ENCODE measurements at regions of chr17 and their contacts with region 1.

Region 1: DNA sequence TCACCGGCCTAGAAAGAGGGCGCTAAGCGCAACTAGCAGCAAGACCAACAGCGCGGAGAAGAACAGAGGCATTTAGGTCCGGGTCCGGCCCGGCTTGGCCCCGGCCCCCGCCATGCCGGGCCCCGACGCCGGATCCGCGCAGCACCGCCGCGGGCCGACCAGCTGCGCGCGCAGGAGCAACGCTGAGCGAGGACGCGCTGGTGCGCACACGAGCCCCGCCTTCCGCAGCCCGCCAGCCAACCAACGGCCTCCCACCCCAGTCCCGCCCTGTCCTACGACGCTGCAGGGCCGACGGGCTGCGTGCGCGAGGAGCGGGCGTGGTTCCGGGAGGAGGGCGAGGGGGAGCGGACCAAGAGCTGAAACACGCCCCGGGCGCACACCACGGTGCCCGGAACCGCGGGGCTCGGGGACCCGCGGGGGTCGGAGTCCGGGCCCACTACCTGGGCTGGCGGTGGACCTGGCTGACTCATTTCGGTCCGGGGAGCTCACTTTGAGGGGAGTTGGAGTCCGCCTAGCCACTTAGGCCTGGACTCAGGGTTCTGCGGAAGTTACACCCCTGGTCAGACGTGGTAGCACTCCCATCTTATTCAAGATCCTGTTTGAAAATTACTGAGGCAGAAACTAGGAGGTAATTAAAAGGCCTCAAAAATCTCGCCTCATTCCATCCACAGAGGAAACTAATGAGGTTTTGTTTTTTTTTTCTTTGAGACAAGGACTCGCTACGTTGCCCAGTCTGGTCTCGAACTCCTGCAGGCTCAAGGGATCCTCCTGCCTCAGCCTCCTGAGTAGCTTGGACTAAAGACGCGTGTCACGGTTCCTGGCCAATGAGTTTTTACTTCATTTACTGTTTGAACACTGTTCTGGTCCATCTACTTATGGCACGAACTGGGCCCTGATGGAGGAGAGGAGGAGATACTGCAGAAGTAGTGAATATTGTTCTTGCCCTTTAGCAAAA is at the start of gene BLTP2:
- DNase-seq: peak; percentile 95
- ATAC-seq: peak; percentile 87 to 88
- H3K4me3 ChIP-seq: peak within 1 kb of the TSS; percentile 90 to 92 (median 92)
- H3K27ac ChIP-seq: peak within 1 kb of the TSS; percentile 90 to 98 (median 96)
- H3K4me1 ChIP-seq: peaks cover 29 to 33% of the 10 kb centered on the region in 2 donors
- H3K27me3 ChIP-seq: no peaks in the 10 kb centered on the region
- CTCF ChIP-seq: peak in 3 of 5 experiments; percentile 10 to 29 (median 13)
- POLR2A ChIP-seq: peak; percentile 92 to 94
- total RNA-seq, gene BLTP2: 71.6 to 93.4 (median 81.0) TPM

Region 2: DNA sequence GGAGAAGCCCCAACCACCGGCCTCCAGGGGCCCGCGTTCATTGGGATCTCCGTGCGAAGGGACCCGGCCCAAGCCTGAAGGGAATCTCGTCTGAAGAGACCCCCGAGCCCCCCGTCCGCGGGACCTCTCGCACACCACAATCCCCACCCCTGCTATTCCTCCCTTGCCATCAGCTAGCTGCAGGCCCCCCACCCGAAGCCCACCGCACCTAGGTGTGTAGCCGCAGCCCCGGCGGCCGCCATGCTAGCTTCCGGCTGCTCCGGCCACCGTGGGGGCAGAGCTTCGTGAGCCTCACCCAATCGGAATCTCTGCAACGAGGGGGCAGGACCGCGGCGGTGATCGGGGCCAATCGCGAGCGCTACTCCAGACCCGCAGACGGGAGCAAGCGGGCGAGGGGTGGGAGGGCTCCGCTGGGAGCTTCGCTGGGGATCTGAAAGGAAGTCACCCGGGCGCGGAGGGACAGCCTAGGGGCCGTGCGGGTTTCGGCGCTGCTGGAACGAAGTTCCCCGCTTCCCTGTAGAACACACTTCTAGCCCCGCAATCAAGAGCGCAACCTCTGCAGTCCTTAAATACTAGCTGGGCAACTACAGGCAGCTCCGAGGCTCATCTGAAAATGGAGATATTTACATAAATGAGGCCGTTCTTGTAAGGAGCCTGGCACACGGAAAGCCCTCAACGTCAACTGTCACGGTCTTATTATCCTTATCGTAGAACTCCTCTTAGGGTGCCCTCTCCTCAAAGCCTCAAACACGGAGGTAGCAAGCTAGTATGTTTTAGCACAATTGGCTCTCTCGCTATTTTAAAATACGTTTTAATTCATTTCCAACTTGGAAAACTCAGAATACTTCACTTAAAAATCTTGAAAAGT is 73.8 kb before region 1 on chr17 and contains the start of gene PIGS:
- in situ Hi-C with region 1: loop called in 1 of 4 experiments (anchors 25 kb)
- intact Hi-C with region 1: loop called (anchors 2 kb)
- DNase-seq: peak; percentile 95 to 96
- ATAC-seq: peak; percentile 93 to 97
- H3K4me3 ChIP-seq: peak within 1 kb of the TSS; percentile 70 to 98 (median 89)
- H3K27ac ChIP-seq: peak within 1 kb of the TSS; percentile 84 to 88 (median 87)
- H3K4me1 ChIP-seq: peaks cover 20 to 25% of the 10 kb centered on the region in 2 donors
- H3K27me3 ChIP-seq: no peaks in the 10 kb centered on the region
- CTCF ChIP-seq: no peak
- POLR2A ChIP-seq: peak; percentile 81 to 87
- total RNA-seq, gene PIGS: 25.0 to 63.0 (median 50.0) TPM

Region 3: DNA sequence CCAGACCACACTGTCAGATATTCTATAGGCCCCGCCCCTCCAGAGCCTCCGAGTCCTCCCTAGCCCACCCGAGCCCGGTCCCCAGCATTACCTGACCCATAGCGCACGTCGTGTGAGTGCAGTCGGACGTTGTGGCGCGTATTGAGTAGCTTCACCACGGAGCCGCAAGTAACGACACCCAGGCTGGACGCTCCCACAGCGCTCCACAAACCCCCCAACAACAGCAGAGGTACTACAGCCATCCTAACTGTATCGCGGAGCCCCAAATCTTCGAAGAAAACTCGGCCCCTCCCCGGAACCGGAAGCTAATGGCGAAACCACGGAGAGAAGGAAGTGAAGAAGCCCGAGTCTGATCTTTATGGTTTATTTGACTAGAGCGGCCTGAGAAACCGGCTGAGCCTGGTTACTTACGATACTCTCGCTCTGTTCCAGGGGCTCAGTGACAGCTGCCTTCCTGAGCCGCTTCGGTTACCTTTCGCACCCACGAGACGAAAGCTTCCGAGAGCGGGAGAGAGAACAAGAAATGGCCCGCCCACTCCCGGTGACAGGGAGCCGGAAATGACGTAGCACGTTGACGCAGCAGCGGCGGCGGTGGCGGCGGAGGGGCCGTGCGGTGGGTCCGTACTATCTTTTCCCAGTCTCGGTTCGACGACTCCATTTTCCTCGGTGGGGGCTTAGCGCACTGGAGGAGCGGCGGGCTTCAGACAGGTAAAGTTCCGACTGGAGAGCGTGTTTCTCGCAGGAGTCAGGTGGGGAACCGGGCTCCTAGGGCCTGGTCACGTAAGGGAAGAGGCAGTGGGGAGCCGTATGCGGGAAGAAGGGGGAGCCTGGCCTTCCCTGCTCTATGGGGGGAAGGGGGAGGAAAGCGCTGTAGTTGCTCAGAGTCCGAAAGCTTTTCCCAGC is 16.6 kb after region 1 on chr17 and contains the starts of genes SDF2 and SUPT6H:
- in situ Hi-C with region 1: no loop called
- intact Hi-C with region 1: loop called (anchors 1 kb)
- DNase-seq: peak; percentile 81 to 84
- ATAC-seq: peak; percentile 94 to 96
- H3K4me3 ChIP-seq: peak within 1 kb of the TSS; percentile 80 to 92 (median 82)
- H3K27ac ChIP-seq: peak within 1 kb of the TSS; percentile 90 to 96 (median 90)
- H3K4me1 ChIP-seq: peaks cover 33 to 38% of the 10 kb centered on the region in 2 donors
- H3K27me3 ChIP-seq: no peaks in the 10 kb centered on the region
- CTCF ChIP-seq: no peak
- POLR2A ChIP-seq: peak; percentile 92 to 97
- total RNA-seq, gene SDF2: 23.6 to 36.4 (median 28.4) TPM
- total RNA-seq, gene SUPT6H: 48.3 to 81.9 (median 64.8) TPM

Region 4: GRCh38 chr17:28717578-28718333 is 72.5 kb after region 1 on chr17 and contains the start of gene RAB34:
- in situ Hi-C with region 1: no loop called
- intact Hi-C with region 1: loop called (anchors 2 kb)
- DNase-seq: peak in 1 of 2 donors; percentile 57
- ATAC-seq: no peak
- H3K4me3 ChIP-seq: peak within 1 kb of the TSS; percentile 48 to 98 (median 70)
- H3K27ac ChIP-seq: peak within 1 kb of the TSS; percentile 86 to 90 (median 88)
- H3K4me1 ChIP-seq: peaks cover 29 to 31% of the 10 kb centered on the region in 2 donors
- H3K27me3 ChIP-seq: peaks cover 2 to 17% (median 11%) of the 10 kb centered on the region in 3 donors
- CTCF ChIP-seq: peak in 2 of 5 experiments; percentile 24 to 37
- POLR2A ChIP-seq: peak; percentile 35 to 45
- total RNA-seq, gene RAB34: 14.9 to 53.3 (median 32.7) TPM

Region 5: DNA sequence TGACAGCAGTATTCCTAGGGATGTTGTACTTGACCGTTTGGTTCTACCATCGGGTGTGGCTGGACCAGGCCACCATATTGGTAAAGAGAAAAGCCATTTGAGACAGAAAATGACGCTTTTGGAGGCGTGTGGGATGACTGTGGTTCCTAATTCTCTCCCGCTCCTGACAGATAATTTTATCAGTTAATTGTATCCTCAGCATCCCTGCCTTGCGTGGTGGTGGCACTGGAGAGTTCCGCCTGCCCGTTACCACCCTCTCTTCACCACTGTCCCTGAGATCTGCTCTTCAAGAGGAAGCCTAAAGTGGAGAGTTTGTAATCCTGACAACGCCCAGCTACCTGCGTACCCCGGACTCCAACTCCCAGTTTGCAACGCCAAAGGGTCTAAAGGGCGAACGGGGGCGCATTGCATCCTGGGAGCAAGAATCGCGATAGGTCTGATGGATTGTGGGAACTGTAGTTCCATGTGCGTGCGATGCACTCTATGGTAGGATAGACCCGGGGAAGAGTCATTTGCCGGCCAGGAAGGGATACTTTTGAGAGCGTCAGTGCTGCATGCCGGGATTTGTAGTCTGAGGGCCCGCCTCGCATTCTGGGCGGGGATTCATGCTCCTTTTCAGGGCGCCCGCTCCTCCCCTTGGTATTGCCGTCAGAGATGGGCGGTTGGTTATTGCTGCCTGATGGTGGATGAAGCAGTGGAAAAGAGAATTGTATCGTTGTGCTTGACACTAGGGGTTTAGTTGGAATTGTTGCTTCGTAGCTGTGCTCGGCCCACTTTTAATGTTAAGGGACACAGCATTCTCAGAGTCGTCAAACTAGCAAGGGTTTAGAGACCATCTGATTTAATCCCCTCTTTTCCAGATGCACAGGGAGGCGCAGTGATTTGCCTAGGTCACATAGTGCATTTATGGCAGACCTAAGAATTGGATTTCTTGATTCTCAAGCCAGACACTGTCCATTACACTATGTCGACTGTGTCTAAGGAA is 307.0 kb after region 1 on chr17:
- in situ Hi-C with region 1: no loop called
- intact Hi-C with region 1: loop called (anchors 1 kb)
- DNase-seq: peak; percentile 98 to 99
- ATAC-seq: peak; percentile 80 to 85
- H3K4me3 ChIP-seq: peak overlapping the region; percentile 49 to 88 (median 68)
- H3K27ac ChIP-seq: peak overlapping the region; percentile 93 to 96 (median 95)
- H3K4me1 ChIP-seq: peaks cover 22 to 25% of the 10 kb centered on the region in 2 donors
- H3K27me3 ChIP-seq: no peaks in the 10 kb centered on the region
- CTCF ChIP-seq: no peak
- POLR2A ChIP-seq: peak; percentile 55 to 84

Measured in gastrocnemius medialis (tissue), 4 donors.